A673 (cell line): ENCODE measurements at regions of chrX and their contacts with region 1.

Region 1: DNA sequence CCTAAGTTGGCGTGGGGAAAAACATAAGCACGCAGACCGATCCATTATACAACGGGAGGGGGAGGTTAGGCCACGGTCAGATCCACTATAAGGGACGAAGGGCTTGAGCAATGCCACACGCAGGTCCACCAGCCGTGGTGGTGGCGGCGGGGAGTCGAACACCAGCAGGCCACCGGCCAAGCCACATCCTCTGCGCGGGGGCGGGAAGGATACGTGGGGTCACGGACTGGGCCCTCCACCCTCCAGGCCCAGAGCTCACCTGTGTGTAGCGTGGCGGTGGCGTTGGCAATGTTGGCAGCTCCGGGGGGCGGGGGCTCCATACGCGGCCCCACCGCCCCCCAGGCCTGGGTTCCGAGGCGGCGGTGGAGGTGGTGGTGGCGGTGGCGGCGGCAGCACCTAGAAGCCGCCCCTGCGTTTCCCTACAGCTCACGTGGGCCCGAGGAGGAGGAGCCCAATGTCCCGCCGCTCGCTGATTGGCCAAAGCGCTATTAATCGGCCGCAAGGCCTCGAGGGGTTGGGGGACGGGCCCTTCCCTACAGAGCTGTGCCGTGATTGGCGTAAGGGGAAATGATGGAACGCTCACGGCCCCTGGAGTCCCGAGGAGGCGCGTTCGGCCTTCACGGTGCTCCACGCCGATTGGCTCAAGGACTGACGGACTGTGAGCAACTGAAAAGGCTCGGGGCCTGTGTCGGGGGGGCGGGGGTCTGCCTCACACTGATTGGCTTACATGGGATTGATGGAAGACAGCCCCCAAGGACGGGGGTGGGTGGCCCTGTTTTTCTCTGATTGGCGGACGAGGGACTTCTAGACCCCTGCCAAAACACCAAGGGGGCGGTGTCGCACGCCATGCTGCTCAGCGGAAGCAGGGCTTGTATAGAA is at the start of gene ELK1:
- DNase-seq: peak; percentile 99
- H3K4me3 ChIP-seq: peak within 1 kb of the TSS; percentile 74
- H3K27ac ChIP-seq: peak within 1 kb of the TSS; percentile 87
- H3K4me1 ChIP-seq: no peaks in the 10 kb centered on the region
- H3K27me3 ChIP-seq: no peaks in the 10 kb centered on the region
- CTCF ChIP-seq: no peak
- total RNA-seq, gene ELK1: 47.6 and 49.7 TPM in 2 replicates

Region 2: DNA sequence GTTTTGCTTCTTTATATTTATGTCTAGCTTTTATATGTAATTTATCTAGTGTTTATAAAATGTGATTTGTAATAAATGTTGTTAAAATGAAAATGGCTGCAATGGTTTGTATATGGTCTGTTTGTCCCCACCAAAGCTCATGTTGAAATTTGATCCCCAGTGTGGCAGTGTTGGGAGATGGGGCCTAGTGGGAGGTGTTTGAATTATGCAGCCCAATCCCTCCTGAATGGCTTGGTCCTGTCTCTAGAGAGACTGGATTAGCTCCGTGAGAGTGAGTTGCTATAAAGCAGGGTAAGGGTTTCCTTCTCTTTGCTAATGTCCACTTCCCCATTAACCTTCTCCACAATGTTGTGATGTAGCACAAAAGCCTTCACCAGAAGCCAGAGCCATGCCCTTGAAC is 768.1 kb before region 1 on chrX:
- CTCF ChIA-PET with region 1: no interaction called
- POLR2A ChIA-PET with region 1: interaction called, 12 read pairs
- intact Hi-C with region 1: no loop called
- DNase-seq: peak; percentile 75
- H3K4me3 ChIP-seq: no peak overlapping the region
- H3K27ac ChIP-seq: no peak overlapping the region
- H3K4me1 ChIP-seq: no peaks in the 10 kb centered on the region
- H3K27me3 ChIP-seq: no peaks in the 10 kb centered on the region
- CTCF ChIP-seq: no peak

Region 3: GRCh38 chrX:47836164-47837072 is 186.0 kb after region 1 on chrX and contains the start of gene ZNF81:
- CTCF ChIA-PET with region 1: no interaction called
- POLR2A ChIA-PET with region 1: no interaction called
- intact Hi-C with region 1: loop called (anchors 10 kb)
- DNase-seq: peak; percentile 96
- H3K4me3 ChIP-seq: peak within 1 kb of the TSS; percentile 53
- H3K27ac ChIP-seq: peak within 1 kb of the TSS; percentile 38
- H3K4me1 ChIP-seq: no peaks in the 10 kb centered on the region
- H3K27me3 ChIP-seq: no peaks in the 10 kb centered on the region
- CTCF ChIP-seq: no peak
- total RNA-seq, gene ZNF81: 11.2 and 12.3 TPM in 2 replicates